ENCODE measurements at regions of chr13 and their contacts with region 1.

Region 1: DNA sequence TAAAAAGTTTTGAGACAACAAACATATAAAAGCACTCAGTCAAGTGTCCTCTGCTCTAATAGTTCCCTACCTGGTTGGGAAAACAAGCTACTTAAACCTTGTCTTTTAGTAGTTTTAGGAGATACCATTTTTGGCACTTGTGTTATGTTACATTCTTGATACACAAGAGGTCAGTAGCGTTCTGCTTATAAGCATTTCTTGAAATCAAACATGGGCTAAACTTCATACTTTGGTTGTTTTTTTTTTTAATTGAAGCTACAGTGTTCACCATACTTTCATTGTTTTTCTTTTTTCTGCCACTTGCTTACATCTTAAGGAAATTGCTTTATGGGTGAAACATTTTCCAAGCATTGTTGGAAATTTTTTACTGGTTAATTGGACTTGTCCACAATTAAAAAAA is 12.9 kb downstream of the NHLRC3 start:
- DNase-seq: no peak
- H3K4me3 ChIP-seq: no peak overlapping the region
- H3K27ac ChIP-seq: no peak overlapping the region
- H3K4me1 ChIP-seq: no peaks in the 10 kb centered on the region
- H3K27me3 ChIP-seq: no peaks in the 10 kb centered on the region
- CTCF ChIP-seq: peak in 1 of 3 experiments; percentile 28
- POLR2A ChIP-seq: no peak

Region 2: GRCh38 chr13:39132286-39133230 is 81.4 kb after region 1 on chr13:
- intact Hi-C with region 1: loop called (anchors 1 kb)
- DNase-seq: no peak
- H3K4me3 ChIP-seq: no peak overlapping the region
- H3K27ac ChIP-seq: no peak overlapping the region
- H3K4me1 ChIP-seq: no peaks in the 10 kb centered on the region
- H3K27me3 ChIP-seq: no peaks in the 10 kb centered on the region
- CTCF ChIP-seq: no peak
- POLR2A ChIP-seq: no peak

Region 3: DNA sequence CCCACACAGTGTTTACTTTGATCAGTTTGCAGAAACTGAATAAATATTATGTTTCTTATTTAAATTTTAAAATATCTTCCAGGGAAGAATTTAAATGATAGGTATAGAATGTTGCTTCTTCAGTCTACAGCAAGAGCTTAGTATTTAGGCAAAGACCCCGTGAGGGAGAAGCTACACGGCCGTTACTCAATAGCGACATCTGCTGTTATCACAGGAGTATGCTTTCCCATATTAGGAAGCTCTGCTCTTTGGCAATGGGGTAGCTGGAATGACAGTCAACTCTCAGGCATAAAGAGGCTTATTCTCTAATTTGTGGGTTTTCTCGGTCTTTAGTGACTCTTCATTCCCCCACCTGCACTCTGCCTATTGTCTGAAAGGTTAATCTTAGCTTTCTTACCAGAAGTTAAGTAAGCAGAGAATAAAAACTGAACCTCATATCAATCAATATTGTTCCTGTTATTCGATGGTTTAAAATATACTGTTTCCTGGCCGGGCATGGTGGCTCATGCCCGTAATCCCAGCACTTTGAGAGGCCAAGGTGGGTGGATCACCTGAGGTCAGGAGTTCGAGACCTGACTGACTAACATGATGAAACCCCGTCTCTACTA is 565.0 kb after region 1 on chr13:
- intact Hi-C with region 1: loop called (anchors 5 kb)
- DNase-seq: no peak
- H3K4me3 ChIP-seq: no peak overlapping the region
- H3K27ac ChIP-seq: no peak overlapping the region
- H3K4me1 ChIP-seq: no peaks in the 10 kb centered on the region
- H3K27me3 ChIP-seq: no peaks in the 10 kb centered on the region
- CTCF ChIP-seq: peak; percentile 66 to 72 (median 66)
- POLR2A ChIP-seq: no peak